PC-9 (cell line): ENCODE measurements at regions of chr10 and their contacts with region 1.

Region 1: GRCh38 chr10:7417103-7417623 is 6.3 kb upstream of the SFMBT2 start:
- DNase-seq: no peak
- H3K4me3 ChIP-seq: no peak overlapping the region
- H3K27ac ChIP-seq: no peak overlapping the region
- H3K4me1 ChIP-seq: no peaks in the 10 kb centered on the region
- H3K27me3 ChIP-seq: peaks cover 8% of the 10 kb centered on the region; the same call in 1 of the 2 replicates
- CTCF ChIP-seq: peak; percentile 54

Region 2: DNA sequence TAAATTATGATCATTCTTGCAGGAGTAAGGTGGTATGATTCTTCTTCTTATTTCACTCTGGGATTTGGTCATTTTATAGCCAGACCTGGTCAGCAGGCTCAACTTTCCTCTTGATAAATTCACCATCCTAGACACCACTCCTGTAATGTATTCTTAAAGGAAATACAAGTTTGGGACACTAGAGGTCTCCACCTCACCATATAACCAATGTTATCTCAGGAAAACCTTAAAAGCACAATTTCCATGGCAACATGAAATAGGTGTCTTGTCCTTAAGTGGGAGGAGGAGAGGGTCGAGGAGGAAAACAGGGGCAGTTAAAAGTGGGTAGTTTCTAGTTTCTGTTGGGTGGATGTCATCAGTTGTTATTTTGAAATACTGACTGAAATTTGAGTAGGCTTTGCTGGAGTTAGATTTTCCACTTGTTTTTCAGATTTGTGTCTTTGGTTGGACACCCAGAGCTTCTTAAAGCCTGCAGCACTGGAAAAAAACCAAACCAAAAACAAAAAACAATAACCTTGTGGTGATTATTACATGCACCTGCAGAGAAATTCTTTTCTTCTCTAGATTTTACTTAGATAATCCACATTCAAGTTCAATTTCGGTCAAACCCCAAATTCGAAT is 1000.2 kb before region 1 on chr10:
- CTCF ChIA-PET with region 1: no interaction called
- POLR2A ChIA-PET with region 1: no interaction called
- intact Hi-C with region 1: loop called (anchors 2 kb)
- DNase-seq: no peak
- H3K4me3 ChIP-seq: no peak overlapping the region
- H3K27ac ChIP-seq: no peak overlapping the region
- H3K4me1 ChIP-seq: no peaks in the 10 kb centered on the region
- H3K27me3 ChIP-seq: no peaks in the 10 kb centered on the region
- CTCF ChIP-seq: peak; percentile 72

Region 3: GRCh38 chr10:6920072-6921019 is 496.8 kb before region 1 on chr10:
- CTCF ChIA-PET with region 1: no interaction called
- POLR2A ChIA-PET with region 1: no interaction called
- intact Hi-C with region 1: loop called (anchors 1 kb)
- DNase-seq: peak in 1 of 2 experiments; percentile 31
- H3K4me3 ChIP-seq: no peak overlapping the region
- H3K27ac ChIP-seq: no peak overlapping the region
- H3K4me1 ChIP-seq: no peaks in the 10 kb centered on the region
- H3K27me3 ChIP-seq: no peaks in the 10 kb centered on the region
- CTCF ChIP-seq: peak; percentile 43; the same call in 1 of the 2 replicates